Breast epithelium (tissue), 4 donors: ENCODE measurements at regions of chr2 and their contacts with region 1.

Region 1: DNA sequence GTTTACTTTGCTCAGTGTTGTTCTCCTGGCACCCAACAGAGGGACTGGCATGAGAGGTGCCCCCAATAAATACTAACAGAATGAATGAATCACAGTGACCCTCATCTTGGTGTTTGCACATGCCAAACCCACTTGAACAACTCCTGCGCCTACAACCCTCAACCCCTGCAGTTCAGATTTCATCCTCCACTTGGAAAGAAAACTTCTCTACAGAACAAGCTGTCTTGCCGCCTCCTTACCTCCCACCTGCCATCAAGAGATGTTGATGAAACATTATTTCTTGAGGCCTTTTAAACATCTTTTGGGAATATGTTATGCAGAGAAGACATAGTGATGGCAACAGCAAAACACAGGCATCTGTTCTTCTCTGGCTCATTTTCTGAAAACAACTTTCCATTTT is 216.0 kb upstream of the SH3BP4 start:
- DNase-seq: no peak
- H3K4me3 ChIP-seq: no peak overlapping the region
- H3K27ac ChIP-seq: no peak overlapping the region
- H3K4me1 ChIP-seq: no peaks in the 10 kb centered on the region
- H3K27me3 ChIP-seq: no peaks in the 10 kb centered on the region
- CTCF ChIP-seq: no peak
- POLR2A ChIP-seq: no peak

Region 2: DNA sequence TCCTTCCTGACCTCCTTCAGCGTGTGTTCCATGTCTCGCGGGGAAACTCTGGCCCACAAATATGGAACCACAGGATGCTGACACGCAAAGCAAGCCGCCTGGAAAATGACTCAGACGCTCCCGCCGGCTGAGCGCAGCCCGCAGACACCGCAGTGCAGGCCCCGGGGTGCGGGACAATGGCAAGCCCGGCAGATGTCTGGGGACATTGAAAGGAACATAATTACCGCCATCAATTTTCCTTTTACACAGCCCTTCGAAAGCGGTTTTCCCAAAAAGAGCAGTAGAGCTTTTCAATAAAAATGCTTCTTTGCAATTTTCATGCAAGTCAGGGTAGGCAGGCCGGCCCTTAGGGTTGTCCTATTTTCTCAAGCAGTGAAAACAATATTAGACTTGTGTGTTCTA is 56.8 kb after region 1 on chr2:
- intact Hi-C with region 1: no loop called
- DNase-seq: no peak
- H3K4me3 ChIP-seq: no peak overlapping the region
- H3K27ac ChIP-seq: no peak overlapping the region
- H3K4me1 ChIP-seq: no peaks in the 10 kb centered on the region
- H3K27me3 ChIP-seq: no peaks in the 10 kb centered on the region
- CTCF ChIP-seq: no peak
- POLR2A ChIP-seq: no peak

Region 3: DNA sequence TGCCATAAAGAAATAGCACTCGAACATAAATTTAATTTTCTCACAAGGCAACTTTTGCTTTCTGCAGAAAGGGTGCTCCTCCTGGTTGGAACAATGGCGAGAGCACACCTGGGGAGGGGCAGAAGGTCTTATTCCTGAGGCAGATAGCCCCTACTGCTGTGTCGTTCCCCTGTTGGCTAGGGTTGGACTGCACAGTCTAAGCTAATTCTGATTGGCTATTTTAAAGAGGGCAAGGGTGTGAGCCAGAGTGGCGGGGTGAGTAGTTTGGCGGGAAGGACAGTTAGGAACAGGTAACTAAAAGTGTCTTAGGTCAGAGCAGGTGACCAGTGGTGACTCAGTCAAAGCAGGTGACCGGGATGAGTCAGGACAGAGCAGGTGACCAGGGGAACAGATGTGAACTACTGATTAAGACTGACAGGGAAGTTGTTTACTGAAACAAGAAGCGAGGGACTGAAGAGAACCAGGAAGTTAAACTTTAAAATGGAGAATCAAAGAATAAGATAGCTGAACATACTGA is 708.3 kb after region 1 on chr2:
- intact Hi-C with region 1: loop called (anchors 5 kb)
- DNase-seq: peak; percentile 56 to 70
- H3K4me3 ChIP-seq: no peak overlapping the region
- H3K27ac ChIP-seq: peak overlapping the region; percentile 66 to 68
- H3K4me1 ChIP-seq: no peaks in the 10 kb centered on the region
- H3K27me3 ChIP-seq: no peaks in the 10 kb centered on the region
- CTCF ChIP-seq: no peak
- POLR2A ChIP-seq: no peak